Activated T-helper 2 cell treated with anti-CD3 and anti-CD28 coated beads, Interferon-gamma antibody, Interleukin-2, Interleukin-4, amounts not matched to agents 10 μg/mL and 5 μg/mL and 100 μg/mL, durations not matched to agents 14 hours and 24 hours and 36 hours (primary cell): ENCODE measurements at regions of chr17 and their contacts with region 1.

Region 1: DNA sequence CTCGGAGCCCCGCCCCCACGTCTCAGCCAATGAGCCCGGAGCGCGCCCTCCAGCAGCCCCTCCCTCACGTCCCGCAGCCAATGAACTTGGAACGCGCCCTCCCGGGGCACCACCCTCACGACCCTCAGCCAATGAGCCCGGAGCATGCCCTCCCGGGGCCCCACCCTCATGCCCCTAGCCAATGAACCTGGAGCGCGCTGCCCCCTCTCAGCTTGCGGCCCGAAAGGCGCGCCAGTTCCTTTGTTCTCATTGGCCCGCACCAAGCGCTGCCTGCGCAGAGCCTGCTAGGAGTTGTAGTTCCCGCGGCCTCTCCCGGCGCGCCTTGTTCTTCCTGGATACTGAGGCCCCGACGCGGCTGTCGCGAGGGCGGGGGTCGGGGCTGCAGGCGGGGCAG is at the start of gene LRRC45:
- DNase-seq: peak; percentile 100
- H3K4me3 Mint-ChIP-seq: peak within 1 kb of the TSS; percentile 84
- H3K27ac Mint-ChIP-seq: peak within 1 kb of the TSS; percentile 22
- H3K4me1 Mint-ChIP-seq: peaks cover 15% of the 10 kb centered on the region
- H3K27me3 Mint-ChIP-seq: no peaks in the 10 kb centered on the region
- total RNA-seq, gene LRRC45: 32.3 and 33.4 TPM in 2 replicates

Region 2: DNA sequence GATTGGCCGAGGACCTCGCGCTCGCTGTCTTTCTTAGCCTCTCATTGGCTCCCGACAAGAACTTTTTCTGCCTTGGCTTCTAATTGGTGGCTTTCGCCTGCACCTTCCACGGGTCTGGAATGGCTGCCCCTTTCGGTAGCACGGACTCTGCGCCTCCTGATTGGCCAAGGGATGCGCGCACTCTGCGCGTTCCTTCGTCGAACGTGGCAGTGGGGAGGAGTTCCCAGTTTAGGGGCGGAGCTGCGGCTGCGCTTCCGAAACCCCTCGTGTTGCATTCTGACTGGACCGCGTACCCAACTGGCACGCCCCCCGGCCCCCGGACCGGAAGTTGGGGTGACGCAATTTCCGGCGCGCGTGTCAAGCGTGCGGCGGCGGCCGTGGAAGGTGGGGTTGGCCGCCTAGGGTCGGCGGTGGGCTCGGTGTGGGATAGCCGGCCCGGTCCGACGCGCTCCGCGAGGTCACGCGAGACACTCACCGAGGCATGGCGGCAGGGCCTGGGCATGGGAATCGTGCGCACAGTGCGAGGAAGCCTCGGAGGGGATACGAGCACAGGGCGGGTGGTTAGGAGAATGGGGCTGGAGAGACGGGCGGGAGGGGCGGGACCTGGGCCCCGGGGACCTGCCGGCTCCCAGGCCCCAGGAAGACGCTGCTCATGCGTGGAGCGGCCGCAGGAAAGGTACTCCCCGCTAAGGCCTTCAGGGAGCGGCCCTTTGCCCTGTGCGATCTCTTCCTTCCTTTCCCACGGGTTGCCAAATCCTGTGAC is 162.0 kb before region 1 on chr17:
- intact Hi-C with region 1: loop called (anchors 2 kb)
- DNase-seq: peak; percentile 100
- H3K4me3 Mint-ChIP-seq: peak overlapping the region; percentile 88
- H3K27ac Mint-ChIP-seq: peak overlapping the region; percentile 88
- H3K4me1 Mint-ChIP-seq: peaks cover 30% of the 10 kb centered on the region
- H3K27me3 Mint-ChIP-seq: no peaks in the 10 kb centered on the region

Region 3: DNA sequence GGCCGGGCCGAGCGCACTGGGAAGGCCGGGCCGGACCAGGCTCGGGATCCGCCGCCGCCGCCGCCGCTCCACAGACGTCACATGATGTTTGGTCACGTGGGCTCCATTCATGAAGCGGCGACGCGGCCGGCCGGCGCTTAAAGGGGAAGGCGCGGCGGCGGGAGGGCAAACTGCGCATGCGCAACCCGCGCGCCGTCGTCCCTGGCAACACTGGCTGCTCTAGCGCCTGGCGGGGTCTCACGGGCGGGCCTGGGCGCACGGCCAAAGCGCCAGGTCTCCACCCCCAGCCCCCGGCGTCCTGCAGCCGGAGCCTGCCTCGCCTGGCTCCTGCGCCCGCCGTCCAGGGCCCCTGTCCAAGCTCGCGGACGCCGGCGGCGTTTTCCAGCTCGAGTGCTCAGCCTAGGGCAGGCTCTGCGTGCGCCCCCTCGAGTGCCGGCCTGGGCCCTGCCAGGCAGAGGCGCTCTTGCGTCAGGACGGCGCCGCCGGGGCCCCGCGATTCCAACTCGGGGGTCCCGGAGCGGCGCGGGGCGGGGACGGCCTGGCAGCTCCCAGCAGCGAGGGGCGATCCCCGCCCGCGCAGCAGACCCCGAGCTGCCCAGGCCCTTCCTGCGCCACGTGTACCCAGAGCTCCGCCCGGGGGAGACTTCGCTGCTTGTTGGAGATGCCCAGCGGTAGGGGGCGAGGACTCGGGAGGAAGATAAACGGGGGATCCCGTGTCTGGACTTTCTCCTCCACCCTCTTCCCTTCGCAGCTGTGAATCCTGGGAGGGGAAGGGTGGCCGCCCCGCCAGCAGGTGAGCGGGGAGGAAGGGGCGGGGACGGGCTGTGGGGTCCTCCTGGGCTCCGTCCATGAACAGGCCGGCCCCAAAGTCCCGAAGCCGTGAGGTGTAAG is 95.1 kb before region 1 on chr17 and contains the start of gene MAFG:
- intact Hi-C with region 1: loop called (anchors 5 kb)
- DNase-seq: peak; percentile 87
- H3K4me3 Mint-ChIP-seq: peak within 1 kb of the TSS; percentile 90
- H3K27ac Mint-ChIP-seq: peak within 1 kb of the TSS; percentile 82
- H3K4me1 Mint-ChIP-seq: peaks cover 14% of the 10 kb centered on the region
- H3K27me3 Mint-ChIP-seq: peaks cover 2% of the 10 kb centered on the region
- total RNA-seq, gene MAFG: 30.3 and 31.8 TPM in 2 replicates

Region 4: GRCh38 chr17:81958633-81959342 is 64.2 kb before region 1 on chr17:
- intact Hi-C with region 1: loop called (anchors 1 kb)
- DNase-seq: no peak
- H3K4me3 Mint-ChIP-seq: peak overlapping the region; percentile 43
- H3K27ac Mint-ChIP-seq: no peak overlapping the region
- H3K4me1 Mint-ChIP-seq: no peaks in the 10 kb centered on the region
- H3K27me3 Mint-ChIP-seq: peaks cover 30% of the 10 kb centered on the region

Region 5: GRCh38 chr17:82037113-82037888 is 14.3 kb after region 1 on chr17 and contains the start of gene DCXR:
- intact Hi-C with region 1: loop called (anchors 1 kb)
- DNase-seq: peak; percentile 97
- H3K4me3 Mint-ChIP-seq: peak within 1 kb of the TSS; percentile 75
- H3K27ac Mint-ChIP-seq: peak within 1 kb of the TSS; percentile 87
- H3K4me1 Mint-ChIP-seq: peaks cover 13% of the 10 kb centered on the region
- H3K27me3 Mint-ChIP-seq: no peaks in the 10 kb centered on the region
- total RNA-seq, gene DCXR: 138 and 145 TPM in 2 replicates

Region 6: GRCh38 chr17:82230627-82231311 is 207.8 kb after region 1 on chr17:
- intact Hi-C with region 1: loop called (anchors 10 kb)
- DNase-seq: peak; percentile 64
- H3K4me3 Mint-ChIP-seq: peak overlapping the region; percentile 95
- H3K27ac Mint-ChIP-seq: no peak overlapping the region
- H3K4me1 Mint-ChIP-seq: peaks cover 8% of the 10 kb centered on the region
- H3K27me3 Mint-ChIP-seq: no peaks in the 10 kb centered on the region